ENCODE measurements at regions of chr10 and their contacts with region 1.

Region 1: DNA sequence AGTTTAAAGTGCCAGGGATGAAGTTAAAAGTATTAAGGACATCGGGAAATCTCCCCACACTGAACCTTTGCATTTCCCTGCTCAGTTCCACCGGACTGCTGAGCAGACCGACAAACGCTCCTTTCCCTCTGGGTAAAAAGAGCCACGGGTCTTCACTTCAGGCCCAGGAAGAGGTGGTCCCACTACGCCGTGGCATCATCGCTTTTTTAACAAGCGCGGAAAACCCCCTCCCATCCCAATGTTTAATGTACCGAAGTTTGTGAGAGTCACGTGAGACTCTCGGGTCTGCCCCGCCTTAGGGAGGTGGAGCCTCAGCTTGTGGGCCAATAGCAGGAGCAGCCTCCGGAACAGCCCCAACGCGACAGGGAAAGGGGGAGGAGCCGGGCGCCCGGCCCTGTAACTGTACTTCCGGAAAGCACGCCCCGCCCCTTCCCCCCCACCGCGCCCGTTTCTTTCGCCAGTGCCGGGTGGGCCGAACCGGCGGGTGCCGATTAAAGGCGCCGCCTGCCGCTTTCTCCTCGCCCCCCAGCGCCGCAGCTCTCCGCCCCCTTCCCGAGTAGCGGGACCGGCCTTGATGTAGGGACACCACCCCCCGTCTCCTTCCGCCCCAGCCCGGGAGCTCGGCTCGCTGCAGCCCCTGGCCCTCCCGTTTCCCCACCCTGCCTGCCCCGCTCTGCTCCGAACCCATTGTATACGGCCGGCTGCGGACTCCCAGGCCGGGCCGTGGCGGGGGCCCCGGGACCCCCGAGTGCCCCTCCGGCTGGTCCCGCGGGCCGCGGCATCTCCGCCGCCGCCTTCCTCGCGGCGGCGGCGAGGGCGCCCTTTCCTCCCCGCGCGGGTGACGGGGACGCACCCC is 2.2 kb upstream of the TRIM8 start:
- DNase-seq: peak; percentile 99
- ATAC-seq: peak; percentile 72
- H3K4me3 Mint-ChIP-seq: peak overlapping the region; percentile 84
- H3K27ac Mint-ChIP-seq: peak overlapping the region; percentile 92
- H3K4me1 Mint-ChIP-seq: peaks cover 19% of the 10 kb centered on the region
- H3K27me3 Mint-ChIP-seq: no peaks in the 10 kb centered on the region

Region 2: DNA sequence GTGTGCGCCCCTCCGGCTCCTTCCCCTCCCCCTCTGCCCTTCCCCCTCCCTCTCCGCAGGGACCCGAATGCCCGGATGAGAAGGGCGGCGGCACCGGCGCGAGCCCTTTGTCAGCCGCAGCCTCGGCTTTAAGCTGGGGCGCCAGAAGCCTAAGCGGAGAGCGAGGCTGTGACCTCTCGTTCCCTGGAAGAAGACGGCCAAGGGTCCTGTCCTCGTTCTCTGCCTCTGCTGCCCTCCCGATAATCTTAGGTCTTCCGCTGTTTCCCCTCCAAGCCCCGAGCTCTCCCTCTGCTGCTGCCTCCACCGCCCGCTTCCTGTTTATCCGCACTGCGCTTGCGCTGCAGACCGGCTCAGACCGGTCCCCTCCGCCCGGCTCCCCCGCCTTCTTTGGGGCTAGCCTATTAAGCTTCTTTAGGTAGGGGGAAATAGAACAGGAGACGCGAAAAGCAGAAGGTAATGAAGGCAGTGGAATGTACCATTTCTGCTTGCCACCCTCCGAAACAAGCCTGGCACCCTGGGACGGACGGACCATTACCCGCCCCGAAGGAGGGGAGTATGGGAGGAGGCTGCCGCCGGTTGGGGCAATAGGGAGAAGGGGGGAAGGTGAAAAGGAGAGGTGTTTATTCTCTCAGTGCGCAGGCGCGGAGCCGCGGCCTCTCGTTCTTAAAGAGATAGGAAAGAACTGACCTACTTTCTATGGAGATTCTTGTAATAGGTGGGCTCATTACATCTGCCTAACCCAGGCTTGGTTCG is 823.8 kb before region 1 on chr10 and contains the start of gene OGA:
- CTCF ChIA-PET with region 1: no interaction called
- POLR2A ChIA-PET with region 1: no interaction called
- intact Hi-C with region 1: loop called in 1 of 2 experiments (anchors 2 kb)
- DNase-seq: peak; percentile 99
- ATAC-seq: peak; percentile 89
- H3K4me3 Mint-ChIP-seq: peak within 1 kb of the TSS; percentile 89
- H3K27ac Mint-ChIP-seq: peak within 1 kb of the TSS; percentile 83
- H3K4me1 Mint-ChIP-seq: peaks cover 40% of the 10 kb centered on the region
- H3K27me3 Mint-ChIP-seq: no peaks in the 10 kb centered on the region
- total RNA-seq, gene OGA: 113 to 124 TPM

Region 3: DNA sequence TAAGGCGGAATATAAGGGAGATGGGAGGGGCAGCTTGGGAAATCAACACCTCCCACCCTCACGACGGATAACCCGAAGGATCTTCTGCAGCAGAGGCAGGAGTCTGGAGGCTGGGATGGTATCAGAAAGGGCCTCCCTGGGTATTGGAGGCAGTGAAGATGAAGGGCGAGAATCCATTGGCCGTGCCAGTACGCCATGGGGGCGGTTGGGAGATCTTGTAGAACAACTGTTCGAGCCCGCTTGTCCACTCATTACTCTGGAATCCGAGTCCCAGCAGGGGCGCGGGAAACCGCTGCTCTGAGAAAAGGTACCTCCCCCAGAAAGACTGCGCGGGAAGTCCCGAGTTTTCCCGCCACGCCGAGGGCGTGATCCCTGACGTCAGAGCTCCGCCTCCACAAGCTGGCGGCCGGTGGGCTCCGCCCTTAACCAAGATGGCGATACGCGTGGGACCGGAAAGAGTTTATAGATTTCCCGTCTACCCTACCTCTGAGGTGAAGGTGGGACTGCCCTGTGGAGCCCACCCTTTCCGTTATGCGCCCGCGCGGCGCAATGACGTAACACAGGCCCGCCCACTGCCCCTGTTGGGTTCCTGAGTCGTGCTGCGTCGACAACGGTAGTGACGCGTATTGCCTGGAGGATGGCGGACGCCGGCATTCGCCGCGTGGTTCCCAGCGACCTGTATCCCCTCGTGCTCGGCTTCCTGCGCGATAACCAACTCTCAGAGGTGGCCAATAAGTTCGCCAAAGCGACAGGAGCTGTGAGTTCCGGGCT is 490.1 kb before region 1 on chr10 and contains the start of gene NOLC1:
- CTCF ChIA-PET with region 1: interaction called, 4 read pairs
- POLR2A ChIA-PET with region 1: no interaction called
- intact Hi-C with region 1: loop called in 1 of 2 experiments (anchors 1 kb)
- DNase-seq: peak; percentile 100
- ATAC-seq: peak; percentile 92
- H3K4me3 Mint-ChIP-seq: peak within 1 kb of the TSS; percentile 99
- H3K27ac Mint-ChIP-seq: peak within 1 kb of the TSS; percentile 99
- H3K4me1 Mint-ChIP-seq: peaks cover 49% of the 10 kb centered on the region
- H3K27me3 Mint-ChIP-seq: no peaks in the 10 kb centered on the region
- total RNA-seq, gene NOLC1: 206 to 283 TPM

Region 4: GRCh38 chr10:102432162-102432950 is 209.8 kb before region 1 on chr10 and contains the start of gene CUEDC2:
- CTCF ChIA-PET with region 1: no interaction called
- POLR2A ChIA-PET with region 1: no interaction called
- intact Hi-C with region 1: loop called in 1 of 2 experiments (anchors 1 kb)
- DNase-seq: peak; percentile 99
- ATAC-seq: peak; percentile 94
- H3K4me3 Mint-ChIP-seq: peak within 1 kb of the TSS; percentile 85
- H3K27ac Mint-ChIP-seq: peak within 1 kb of the TSS; percentile 94
- H3K4me1 Mint-ChIP-seq: peaks cover 42% of the 10 kb centered on the region
- H3K27me3 Mint-ChIP-seq: no peaks in the 10 kb centered on the region
- total RNA-seq, gene CUEDC2: 60.8 to 72.7 TPM

Region 5: GRCh38 chr10:102713814-102714620 is 71.9 kb after region 1 on chr10 and contains the start of gene ARL3:
- CTCF ChIA-PET with region 1: interaction called, 29 read pairs
- POLR2A ChIA-PET with region 1: interaction called, 8 read pairs
- intact Hi-C with region 1: loop called (anchors 1 kb)
- DNase-seq: peak; percentile 99
- ATAC-seq: peak; percentile 90
- H3K4me3 Mint-ChIP-seq: peak within 1 kb of the TSS; percentile 82
- H3K27ac Mint-ChIP-seq: peak within 1 kb of the TSS; percentile 81
- H3K4me1 Mint-ChIP-seq: peaks cover 59% of the 10 kb centered on the region
- H3K27me3 Mint-ChIP-seq: no peaks in the 10 kb centered on the region
- total RNA-seq, gene ARL3: 6.4 to 6.9 TPM

Region 6: DNA sequence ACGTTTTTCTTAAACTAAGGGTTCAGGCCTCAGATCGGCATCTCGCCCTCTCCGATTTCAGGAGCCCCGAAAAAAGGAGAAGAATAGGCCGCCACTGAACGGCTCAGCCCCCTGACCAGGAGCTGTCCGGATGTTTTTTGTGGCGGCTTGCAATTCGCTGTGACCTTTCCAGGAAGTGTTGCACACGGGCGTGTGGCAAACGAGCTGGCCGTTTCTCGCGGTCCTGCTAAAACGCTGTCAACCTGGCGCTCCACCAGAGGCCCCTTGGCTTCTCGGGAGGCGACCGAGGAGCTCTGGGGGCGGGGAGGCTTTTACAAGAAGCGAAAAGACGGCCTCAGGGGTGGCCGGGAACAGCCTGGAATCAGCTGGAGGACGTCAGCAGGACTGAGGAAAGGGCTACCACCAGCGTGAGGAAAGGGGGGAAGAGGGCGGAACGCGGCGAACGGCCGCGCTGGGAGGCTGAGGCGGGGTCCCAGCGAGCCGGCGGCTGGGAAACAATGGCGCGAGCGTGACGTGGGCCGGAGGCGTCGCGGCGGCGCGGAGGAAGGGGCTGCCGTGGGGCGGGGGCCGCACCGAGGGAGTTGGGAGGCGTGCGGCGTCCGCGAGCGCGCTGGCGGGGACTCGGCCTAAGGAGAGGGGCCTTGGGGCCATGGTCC is 550.5 kb after region 1 on chr10:
- CTCF ChIA-PET with region 1: no interaction called
- POLR2A ChIA-PET with region 1: no interaction called
- intact Hi-C with region 1: loop called in 1 of 2 experiments (anchors 2 kb)
- DNase-seq: peak; percentile 81
- ATAC-seq: peak; percentile 50
- H3K4me3 Mint-ChIP-seq: peak overlapping the region; percentile 95
- H3K27ac Mint-ChIP-seq: peak overlapping the region; percentile 99
- H3K4me1 Mint-ChIP-seq: peaks cover 44% of the 10 kb centered on the region
- H3K27me3 Mint-ChIP-seq: no peaks in the 10 kb centered on the region

Measured in activated CD4-positive, alpha-beta T cell treated with anti-CD3 and anti-CD28 coated beads for 36 hours (primary cell).